Activated CD4-positive, alpha-beta T cell treated with anti-CD3 and anti-CD28 coated beads, Interleukin-2, amount 10 ng/mL, durations not matched to agents 7 days and 5 days (primary cell): ENCODE measurements at regions of chr14 and their contacts with region 1.

Region 1: DNA sequence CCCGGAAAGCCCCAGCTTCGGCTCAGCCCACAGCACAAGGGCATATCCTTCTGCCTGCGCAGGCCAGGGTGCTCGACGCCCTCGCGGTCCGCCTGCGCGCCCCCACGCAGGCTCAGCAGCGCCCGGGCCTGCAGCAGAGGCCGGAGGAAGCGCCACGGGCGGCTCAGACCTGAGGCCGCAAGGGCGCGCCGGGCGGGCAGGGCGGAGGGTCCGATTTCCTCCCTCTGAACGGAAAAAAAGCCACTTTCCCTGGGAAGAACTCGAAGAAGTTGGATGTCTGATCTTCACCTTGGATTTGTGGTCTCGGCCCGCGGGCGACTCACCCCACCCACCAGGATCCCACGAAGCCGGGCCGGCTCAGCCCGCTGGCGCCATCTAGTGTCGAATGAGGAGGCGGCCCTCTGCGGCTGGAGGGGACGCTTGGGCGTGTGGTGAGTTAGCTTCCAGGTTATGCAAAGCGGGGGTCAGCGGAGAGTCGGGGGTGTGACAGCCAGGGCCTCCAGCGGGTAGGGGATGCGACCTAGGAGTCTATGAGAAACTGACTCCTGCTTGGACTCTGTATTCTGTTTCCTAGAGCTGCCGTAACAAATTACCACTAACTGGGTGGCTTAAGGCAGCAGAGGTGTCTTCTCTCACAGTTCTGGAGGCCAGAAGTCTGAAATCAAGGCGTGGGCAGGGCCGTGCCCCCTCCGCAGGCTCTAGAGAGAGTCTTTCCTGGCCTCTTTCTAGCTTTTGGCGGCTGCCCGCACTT is 40.0 kb upstream of the SRSF5 start:
- DNase-seq: peak; percentile 82
- H3K4me3 Mint-ChIP-seq: peak overlapping the region; percentile 65
- H3K27ac Mint-ChIP-seq: peak overlapping the region; percentile 79
- H3K4me1 Mint-ChIP-seq: peaks cover 36% of the 10 kb centered on the region
- H3K27me3 Mint-ChIP-seq: no peaks in the 10 kb centered on the region

Region 2: DNA sequence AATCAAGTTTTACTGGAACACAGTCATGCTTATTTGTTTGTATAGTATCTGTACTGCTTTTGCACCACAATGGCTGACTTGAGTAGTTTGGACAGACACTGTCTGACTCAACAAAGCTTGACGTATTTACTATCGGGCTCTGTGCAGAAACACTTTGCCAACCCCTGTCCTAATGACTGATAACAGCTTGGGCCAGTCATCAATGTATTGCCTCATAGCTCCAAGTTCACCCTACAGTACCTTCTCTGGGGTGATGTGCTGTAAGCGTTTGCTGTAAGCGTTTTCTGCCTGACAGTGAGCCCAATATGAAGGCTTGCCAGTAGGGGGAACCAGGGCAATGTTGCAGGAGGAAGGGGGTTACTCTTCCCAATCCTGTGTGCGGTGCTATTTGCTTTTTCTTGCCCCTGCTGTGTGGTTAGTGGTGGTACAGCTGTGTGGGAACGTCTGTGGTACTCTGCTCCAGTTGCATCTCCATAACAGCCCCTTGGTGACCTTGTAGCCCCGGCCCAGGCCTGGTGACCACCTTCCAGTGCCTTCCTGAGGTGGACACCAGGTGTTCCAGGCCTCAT is 146.8 kb before region 1 on chr14:
- CTCF ChIA-PET with region 1: interaction called, 18 read pairs
- POLR2A ChIA-PET with region 1: no interaction called
- DNase-seq: peak; percentile 36
- H3K4me3 Mint-ChIP-seq: no peak overlapping the region
- H3K27ac Mint-ChIP-seq: no peak overlapping the region
- H3K4me1 Mint-ChIP-seq: peaks cover 3% of the 10 kb centered on the region
- H3K27me3 Mint-ChIP-seq: peaks cover 30% of the 10 kb centered on the region

Region 3: GRCh38 chr14:69586404-69586803 is 140.5 kb before region 1 on chr14:
- CTCF ChIA-PET with region 1: interaction called, 18 read pairs
- POLR2A ChIA-PET with region 1: interaction called, 3 read pairs
- DNase-seq: no peak
- H3K4me3 Mint-ChIP-seq: no peak overlapping the region
- H3K27ac Mint-ChIP-seq: no peak overlapping the region
- H3K4me1 Mint-ChIP-seq: peaks cover 12% of the 10 kb centered on the region
- H3K27me3 Mint-ChIP-seq: no peaks in the 10 kb centered on the region

Region 4: GRCh38 chr14:69606258-69607184 is 120.4 kb before region 1 on chr14:
- CTCF ChIA-PET with region 1: interaction called, 7 read pairs
- POLR2A ChIA-PET with region 1: interaction called, 14 read pairs
- DNase-seq: no peak
- H3K4me3 Mint-ChIP-seq: no peak overlapping the region
- H3K27ac Mint-ChIP-seq: no peak overlapping the region
- H3K4me1 Mint-ChIP-seq: peaks cover 22% of the 10 kb centered on the region
- H3K27me3 Mint-ChIP-seq: no peaks in the 10 kb centered on the region

Region 5: DNA sequence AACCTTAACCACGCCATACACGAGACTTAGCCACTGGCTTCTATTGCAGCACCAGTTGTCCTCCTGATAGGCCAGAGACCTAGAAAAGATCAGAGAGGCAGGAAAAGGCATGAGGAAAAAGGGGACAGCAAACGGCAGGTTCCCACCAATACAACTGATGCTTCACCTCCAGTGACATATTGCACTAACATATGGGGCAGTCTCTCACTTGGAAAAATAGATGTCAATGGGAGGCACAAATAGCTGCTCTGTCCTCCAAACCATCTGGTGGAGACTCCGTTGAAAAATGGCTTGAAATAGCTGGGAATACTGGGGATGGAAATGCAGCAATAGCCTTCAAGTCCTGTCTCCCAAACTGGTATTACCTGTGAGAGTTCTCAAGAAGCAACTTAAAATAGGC is 441.5 kb after region 1 on chr14:
- CTCF ChIA-PET with region 1: no interaction called
- POLR2A ChIA-PET with region 1: no interaction called
- DNase-seq: no peak
- H3K4me3 Mint-ChIP-seq: no peak overlapping the region
- H3K27ac Mint-ChIP-seq: no peak overlapping the region
- H3K4me1 Mint-ChIP-seq: no peaks in the 10 kb centered on the region
- H3K27me3 Mint-ChIP-seq: peaks cover 25% of the 10 kb centered on the region